K562 (cell line): ENCODE measurements at regions of chr6 and their contacts with region 1.

Region 1: DNA sequence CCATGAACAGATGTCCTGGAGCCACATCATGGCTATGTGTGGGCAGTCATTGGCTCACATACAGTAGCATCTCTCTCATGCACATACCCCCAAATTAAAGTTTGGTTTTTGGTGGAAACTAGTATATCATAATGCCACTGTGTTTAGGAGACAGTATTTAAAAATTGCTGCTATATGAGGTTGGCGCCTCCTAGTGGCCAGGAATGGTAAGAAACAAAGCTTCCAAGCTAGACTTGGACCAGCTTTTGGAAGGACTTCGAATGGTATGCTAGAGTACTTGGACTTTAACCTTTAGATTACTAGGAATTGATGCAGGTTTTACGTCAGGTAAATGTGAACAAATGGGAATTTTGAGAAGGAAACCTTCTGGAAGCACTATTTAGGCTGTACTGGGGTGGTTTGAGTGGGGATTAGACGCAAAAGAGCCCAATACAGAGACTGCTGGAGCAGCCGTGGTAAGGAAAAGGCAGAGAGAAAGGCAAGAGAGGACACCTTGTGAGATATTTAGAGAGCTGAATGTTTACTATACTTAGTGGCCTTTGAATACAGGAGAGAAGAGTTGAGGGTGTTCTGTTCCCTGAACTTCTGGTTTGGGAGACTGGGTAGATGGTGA is 23.8 kb downstream of the PRSS35 start:
- DNase-seq: peak; percentile 46 to 72 (median 58)
- ATAC-seq: peak; percentile 87
- H3K4me3 ChIP-seq: no peak overlapping the region
- H3K27ac ChIP-seq: no peak overlapping the region
- H3K4me1 ChIP-seq: no peaks in the 10 kb centered on the region
- H3K27me3 ChIP-seq: no peaks in the 10 kb centered on the region; a peak in 1 of 5 replicates
- CTCF ChIP-seq: peak; percentile 65 to 88 (median 76)
- EP300 ChIP-seq: no peak
- POLR2A ChIP-seq: no peak
- RAD21 ChIP-seq: peak; percentile 35 to 67; a peak in 3 of 4 replicates

Region 2: DNA sequence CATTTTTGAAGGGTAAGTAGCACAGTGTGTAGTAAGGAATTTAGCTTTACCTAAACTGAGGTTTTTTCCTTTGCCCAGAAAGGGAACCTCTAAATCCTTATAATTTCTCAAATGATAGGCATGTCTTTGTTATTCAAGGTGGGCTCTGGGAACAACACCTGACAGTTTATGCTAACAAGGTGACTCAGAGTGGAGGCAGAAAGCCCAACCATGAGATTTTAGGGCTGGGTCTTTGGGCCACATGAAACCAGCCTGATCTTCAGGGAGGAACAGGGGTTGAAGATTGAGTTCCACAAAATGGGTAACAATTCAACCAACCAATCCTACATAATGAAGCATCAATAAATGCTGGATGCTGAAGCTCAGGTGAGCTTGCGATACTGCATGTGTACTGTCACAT is 22.8 kb after region 1 on chr6:
- CTCF ChIA-PET with region 1: no interaction called
- POLR2A ChIA-PET with region 1: no interaction called
- in situ Hi-C with region 1: no loop called
- intact Hi-C with region 1: no loop called
- DNase-seq: no peak
- ATAC-seq: no peak
- H3K4me3 ChIP-seq: no peak overlapping the region
- H3K27ac ChIP-seq: no peak overlapping the region
- H3K4me1 ChIP-seq: no peaks in the 10 kb centered on the region
- H3K27me3 ChIP-seq: no peaks in the 10 kb centered on the region; a peak in 1 of 5 replicates
- CTCF ChIP-seq: no peak
- EP300 ChIP-seq: no peak
- POLR2A ChIP-seq: no peak
- RAD21 ChIP-seq: no peak

Region 3: DNA sequence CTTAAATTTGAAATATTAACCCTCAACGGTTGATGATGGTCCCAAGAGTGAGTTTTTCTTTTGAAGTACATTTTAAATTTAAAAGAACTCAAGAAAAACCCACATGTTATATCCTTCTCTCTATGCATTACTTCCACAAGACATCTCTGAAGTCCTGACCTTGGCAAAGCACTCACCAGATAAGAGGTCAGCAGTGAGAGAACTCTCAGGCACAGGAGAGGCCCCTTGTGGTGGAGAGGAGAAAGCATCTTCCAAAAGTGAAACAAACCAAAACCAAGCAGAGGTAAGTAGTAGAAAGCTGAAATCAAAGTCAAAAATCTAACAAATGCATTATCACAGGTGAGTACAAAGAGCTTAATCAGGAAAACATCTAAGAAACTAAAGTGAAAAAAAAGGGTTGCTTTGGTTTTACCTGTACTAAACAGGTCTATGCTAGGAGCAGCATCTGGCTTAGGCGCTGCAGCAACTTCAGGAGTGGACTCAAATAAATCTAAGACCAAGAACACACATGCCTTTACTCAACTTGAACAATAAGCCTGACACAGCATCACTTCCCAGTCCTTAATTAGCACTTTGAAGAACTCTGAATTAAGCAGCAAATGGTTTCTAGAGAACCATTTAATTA is 56.7 kb after region 1 on chr6:
- CTCF ChIA-PET with region 1: interaction called, 3 read pairs
- POLR2A ChIA-PET with region 1: no interaction called
- in situ Hi-C with region 1: no loop called
- intact Hi-C with region 1: loop called (anchors 5 kb)
- DNase-seq: peak; percentile 8 to 62 (median 24)
- ATAC-seq: peak; percentile 98
- H3K4me3 ChIP-seq: no peak overlapping the region
- H3K27ac ChIP-seq: no peak overlapping the region
- H3K4me1 ChIP-seq: peaks cover 0 to 4% of the 10 kb centered on the region in 2 experiments; a peak in 1 of 5 replicates
- H3K27me3 ChIP-seq: peaks cover 2 to 5% of the 10 kb centered on the region in 2 experiments; a peak in 2 of 5 replicates
- CTCF ChIP-seq: peak; percentile 64 to 73 (median 69); a peak in 5 of 6 replicates
- EP300 ChIP-seq: no peak
- POLR2A ChIP-seq: no peak
- RAD21 ChIP-seq: peak; percentile 38 to 53; a peak in 3 of 4 replicates

Region 4: GRCh38 chr6:83770910-83771309 is 234.8 kb after region 1 on chr6:
- CTCF ChIA-PET with region 1: no interaction called
- POLR2A ChIA-PET with region 1: no interaction called
- in situ Hi-C with region 1: no loop called
- intact Hi-C with region 1: no loop called
- DNase-seq: no peak
- ATAC-seq: no peak
- H3K4me3 ChIP-seq: no peak overlapping the region
- H3K27ac ChIP-seq: no peak overlapping the region
- H3K4me1 ChIP-seq: no peaks in the 10 kb centered on the region
- H3K27me3 ChIP-seq: no peaks in the 10 kb centered on the region
- CTCF ChIP-seq: no peak
- EP300 ChIP-seq: no peak
- POLR2A ChIP-seq: no peak
- RAD21 ChIP-seq: no peak